Activated T-helper 2 cell treated with anti-CD3 and anti-CD28 coated beads, Interferon-gamma antibody, Interleukin-2, Interleukin-4, amounts not matched to agents 10 μg/mL and 5 μg/mL and 100 μg/mL, durations not matched to agents 14 hours and 24 hours and 36 hours (primary cell): ENCODE measurements at regions of chr2 and their contacts with region 1.

Region 1: DNA sequence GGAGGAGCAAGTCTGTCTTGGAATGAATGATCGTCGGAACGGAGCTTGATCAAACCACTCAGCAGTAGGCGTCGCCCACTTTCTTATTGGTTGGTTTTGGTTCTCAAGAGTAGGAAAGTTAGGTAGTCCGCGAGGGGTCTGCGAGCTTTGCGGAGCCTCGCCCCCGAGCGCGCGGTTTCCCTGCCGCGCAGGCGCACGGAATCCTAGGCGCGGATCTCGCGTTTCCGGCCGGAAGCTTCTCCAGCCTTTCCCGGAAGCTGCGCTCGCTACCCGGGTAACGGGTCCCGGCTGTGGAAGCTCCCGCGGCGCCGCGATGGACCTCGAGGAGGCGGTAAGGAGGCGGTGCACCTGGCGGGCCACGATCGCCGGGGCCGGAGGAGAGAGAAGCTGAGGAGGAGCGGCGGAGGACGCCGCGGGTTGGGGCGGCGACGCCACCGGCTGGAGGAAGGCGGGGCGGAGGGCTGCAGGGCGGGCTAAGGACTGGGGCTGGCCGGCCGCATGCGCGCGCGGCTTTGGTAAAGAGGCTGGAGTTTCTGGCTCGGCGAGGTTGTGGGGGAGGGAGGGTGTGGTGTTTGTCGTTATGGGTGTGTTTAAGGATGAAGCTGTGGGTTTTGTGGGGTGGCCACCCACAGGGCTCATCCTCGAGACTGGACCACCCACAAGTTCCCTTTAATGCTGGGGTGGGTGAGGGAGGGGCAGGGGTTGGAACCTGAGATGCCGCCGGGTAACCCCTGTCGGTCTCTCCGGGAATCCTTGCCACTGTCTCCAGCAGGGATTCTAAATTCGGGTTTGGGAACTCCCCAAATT is at the start of gene TAF1B:
- DNase-seq: peak; percentile 91
- H3K4me3 Mint-ChIP-seq: peak within 1 kb of the TSS; percentile 88
- H3K27ac Mint-ChIP-seq: peak within 1 kb of the TSS; percentile 89
- H3K4me1 Mint-ChIP-seq: peaks cover 47% of the 10 kb centered on the region
- H3K27me3 Mint-ChIP-seq: no peaks in the 10 kb centered on the region
- total RNA-seq, gene TAF1B: 29.3 and 32.4 TPM in 2 replicates

Region 2: GRCh38 chr2:9423100-9423921 is 420.1 kb before region 1 on chr2 and contains the starts of genes CPSF3 and ITGB1BP1:
- intact Hi-C with region 1: loop called (anchors 5 kb)
- DNase-seq: peak; percentile 97
- H3K4me3 Mint-ChIP-seq: peak within 1 kb of the TSS; percentile 91
- H3K27ac Mint-ChIP-seq: peak within 1 kb of the TSS; percentile 93
- H3K4me1 Mint-ChIP-seq: peaks cover 31% of the 10 kb centered on the region
- H3K27me3 Mint-ChIP-seq: no peaks in the 10 kb centered on the region
- total RNA-seq, gene CPSF3: 69.5 and 73.2 TPM in 2 replicates
- total RNA-seq, gene ITGB1BP1: 118 and 128 TPM in 2 replicates

Region 3: DNA sequence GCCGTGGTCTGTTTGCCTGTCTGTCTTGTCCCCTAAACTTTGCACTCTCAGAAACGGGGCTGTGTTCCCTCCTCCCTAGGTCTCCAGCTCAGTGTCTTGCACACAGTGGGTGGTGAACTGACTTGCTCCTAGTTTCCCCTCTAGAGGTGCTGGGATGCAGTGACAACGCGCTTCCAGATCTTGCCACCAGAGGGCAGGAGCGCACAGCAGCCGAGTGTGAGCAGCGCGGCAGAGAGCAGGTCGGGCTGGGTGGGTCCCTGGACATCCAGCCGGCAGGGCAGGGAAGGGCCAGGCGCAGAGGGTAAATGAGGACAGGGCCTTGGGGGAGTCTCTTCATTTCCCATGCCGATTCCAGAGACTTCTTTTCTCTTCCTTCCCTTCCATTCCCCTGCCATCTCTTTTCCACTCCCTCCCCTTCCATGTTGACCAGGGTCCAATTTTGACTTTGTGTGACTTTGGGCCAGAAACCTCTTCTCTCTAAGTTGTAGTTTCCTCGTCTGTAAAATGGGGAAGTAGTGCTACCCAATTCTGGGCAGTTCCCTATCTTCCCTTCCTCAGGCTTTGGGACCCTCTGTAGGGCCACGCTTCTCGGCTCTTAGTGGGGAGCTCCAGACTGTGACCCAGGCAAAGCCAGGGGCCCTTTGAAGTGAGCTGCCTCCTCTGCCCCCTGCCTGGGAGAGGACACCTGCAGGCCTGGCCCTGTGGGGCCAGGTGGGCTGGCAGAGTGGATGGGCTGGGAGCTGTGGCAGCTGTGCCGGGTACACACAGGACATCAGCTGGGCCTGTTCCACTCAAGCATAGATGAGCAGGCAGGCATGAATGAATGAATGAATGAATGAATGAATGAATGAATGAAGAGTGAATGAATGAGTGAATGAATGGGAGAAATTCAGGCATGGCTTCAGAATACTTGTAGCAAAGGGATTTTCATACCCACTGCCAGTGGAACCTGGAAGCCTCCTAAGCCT is 43.5 kb before region 1 on chr2:
- intact Hi-C with region 1: no loop called
- DNase-seq: peak; percentile 81
- H3K4me3 Mint-ChIP-seq: peak overlapping the region; percentile 72
- H3K27ac Mint-ChIP-seq: peak overlapping the region; percentile 71
- H3K4me1 Mint-ChIP-seq: peaks cover 34% of the 10 kb centered on the region
- H3K27me3 Mint-ChIP-seq: no peaks in the 10 kb centered on the region

Region 4: DNA sequence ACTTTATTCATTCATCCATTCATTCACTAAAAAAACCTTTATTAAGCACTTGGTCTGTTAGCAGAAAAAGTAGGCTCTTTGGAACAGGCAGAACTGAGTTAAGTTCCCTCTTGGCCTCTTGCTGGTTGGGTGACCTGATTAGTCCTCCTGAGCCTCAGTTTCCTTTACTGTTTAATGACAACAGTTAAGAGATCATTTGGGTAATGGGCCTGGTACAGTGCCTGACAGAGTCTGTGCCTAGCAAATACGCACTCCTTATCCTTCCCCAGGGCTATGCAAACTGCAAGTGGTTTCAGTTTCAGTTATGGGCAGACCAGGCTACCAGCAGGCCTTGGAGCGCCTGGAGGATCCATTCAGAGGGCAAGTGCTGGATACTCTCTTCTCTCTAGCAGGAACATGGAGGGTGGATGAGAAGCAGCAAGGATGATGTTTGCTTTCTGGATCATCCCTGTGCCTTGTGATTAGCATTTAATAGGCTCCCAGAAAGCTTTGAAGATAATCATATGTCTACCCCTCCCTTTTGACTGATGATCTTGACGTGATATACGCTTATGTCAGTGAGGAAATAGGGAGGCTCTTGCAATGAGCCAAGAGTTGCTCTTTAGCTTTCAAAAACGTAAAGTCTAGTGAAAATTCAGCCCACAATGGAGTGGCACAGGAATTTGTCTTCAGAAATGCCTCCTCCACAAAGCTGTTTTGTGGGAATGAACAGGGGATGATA is 12.6 kb before region 1 on chr2:
- intact Hi-C with region 1: loop called (anchors 1 kb)
- DNase-seq: no peak
- H3K4me3 Mint-ChIP-seq: no peak overlapping the region
- H3K27ac Mint-ChIP-seq: no peak overlapping the region
- H3K4me1 Mint-ChIP-seq: peaks cover 27% of the 10 kb centered on the region
- H3K27me3 Mint-ChIP-seq: peaks cover 21% of the 10 kb centered on the region

Region 5: GRCh38 chr2:9857814-9858729 is 14.6 kb after region 1 on chr2:
- intact Hi-C with region 1: no loop called
- DNase-seq: no peak
- H3K4me3 Mint-ChIP-seq: no peak overlapping the region
- H3K27ac Mint-ChIP-seq: no peak overlapping the region
- H3K4me1 Mint-ChIP-seq: no peaks in the 10 kb centered on the region
- H3K27me3 Mint-ChIP-seq: no peaks in the 10 kb centered on the region

Region 6: GRCh38 chr2:9914384-9915065 is 71.1 kb after region 1 on chr2:
- intact Hi-C with region 1: loop called (anchors 5 kb)
- DNase-seq: no peak
- H3K4me3 Mint-ChIP-seq: no peak overlapping the region
- H3K27ac Mint-ChIP-seq: no peak overlapping the region
- H3K4me1 Mint-ChIP-seq: peaks cover 12% of the 10 kb centered on the region
- H3K27me3 Mint-ChIP-seq: no peaks in the 10 kb centered on the region

Region 7: DNA sequence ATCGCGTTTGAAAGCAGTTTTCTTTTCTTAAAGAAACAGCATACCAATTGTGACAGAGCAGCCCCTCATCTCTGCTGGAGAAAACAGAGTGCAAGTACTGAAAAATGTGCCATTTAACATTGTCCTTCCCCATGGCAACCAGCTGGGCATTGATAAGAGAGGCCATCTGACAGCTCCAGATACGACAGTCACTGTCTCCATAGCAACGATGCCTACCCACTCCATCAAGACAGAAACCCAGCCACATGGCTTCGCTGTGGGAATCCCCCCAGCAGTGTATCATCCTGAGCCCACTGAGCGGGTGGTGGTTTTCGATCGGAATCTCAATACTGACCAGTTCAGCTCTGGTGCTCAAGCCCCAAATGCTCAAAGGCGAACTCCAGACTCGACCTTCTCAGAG is 117.6 kb after region 1 on chr2:
- intact Hi-C with region 1: no loop called
- DNase-seq: no peak
- H3K4me3 Mint-ChIP-seq: no peak overlapping the region
- H3K27ac Mint-ChIP-seq: no peak overlapping the region
- H3K4me1 Mint-ChIP-seq: peaks cover 17% of the 10 kb centered on the region
- H3K27me3 Mint-ChIP-seq: peaks cover 8% of the 10 kb centered on the region

Region 8: DNA sequence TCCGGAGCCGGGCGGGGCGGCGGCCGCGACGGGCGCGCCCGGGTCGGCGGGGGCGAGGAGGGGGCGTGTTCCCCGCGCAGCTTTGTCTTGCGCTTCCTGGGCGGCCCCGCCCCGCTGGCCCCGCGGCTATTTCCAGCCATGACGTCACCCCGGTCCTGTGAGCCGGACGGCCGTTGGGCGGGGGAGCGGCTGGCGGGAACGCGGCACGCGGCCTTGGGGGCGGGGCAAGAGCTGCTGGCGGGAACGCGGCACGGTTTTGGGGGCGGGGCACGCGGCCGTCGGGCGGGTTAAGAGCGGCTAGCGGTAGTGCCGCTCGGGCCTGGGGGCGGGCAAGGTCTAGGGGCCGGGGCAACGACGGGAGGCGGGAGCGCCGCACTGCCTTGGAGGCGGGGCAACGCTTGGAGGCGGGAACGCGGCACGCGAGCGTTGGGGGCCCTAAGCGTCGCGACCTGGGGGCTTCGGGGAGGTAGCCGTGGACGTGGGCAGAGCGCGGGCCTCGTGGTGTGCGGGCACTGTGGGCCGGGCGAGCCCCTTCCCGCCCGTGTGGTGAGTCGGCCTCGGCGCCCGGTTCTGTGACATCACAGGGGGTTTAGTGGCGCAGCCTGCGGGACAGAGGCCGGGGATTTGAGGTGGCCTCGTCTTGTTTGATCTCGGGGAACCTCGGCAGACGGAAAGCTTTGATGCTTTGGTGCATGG is 200.6 kb after region 1 on chr2:
- intact Hi-C with region 1: loop called (anchors 1 kb)
- DNase-seq: peak; percentile 88
- H3K4me3 Mint-ChIP-seq: peak overlapping the region; percentile 71
- H3K27ac Mint-ChIP-seq: peak overlapping the region; percentile 60
- H3K4me1 Mint-ChIP-seq: peaks cover 16% of the 10 kb centered on the region
- H3K27me3 Mint-ChIP-seq: peaks cover 16% of the 10 kb centered on the region

Region 9: DNA sequence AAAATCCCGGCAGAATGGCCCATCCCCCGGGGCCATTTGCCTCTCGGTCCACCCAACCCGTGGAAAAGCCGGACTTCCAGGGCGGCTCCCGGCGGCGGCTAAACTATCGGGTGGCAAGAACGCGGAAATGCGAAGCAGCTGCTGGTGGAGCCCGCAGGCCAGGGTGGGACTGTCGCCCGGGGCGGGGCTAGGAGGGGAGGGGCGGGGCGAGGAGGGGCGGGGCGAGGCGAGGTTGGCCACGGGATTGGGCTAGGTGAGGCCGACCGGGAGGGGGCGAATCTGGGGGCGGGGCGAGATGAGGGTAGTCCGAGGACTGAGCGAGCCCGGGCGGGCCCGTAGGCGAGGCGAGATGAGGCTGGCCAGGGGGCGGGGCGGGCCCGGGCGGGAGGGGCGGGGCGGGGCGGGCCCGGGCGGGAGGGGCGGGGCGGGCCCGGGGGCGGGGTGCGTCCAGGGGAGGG is 1311.5 kb after region 1 on chr2:
- intact Hi-C with region 1: loop called (anchors 10 kb)
- DNase-seq: peak; percentile 94
- H3K4me3 Mint-ChIP-seq: peak overlapping the region; percentile 83
- H3K27ac Mint-ChIP-seq: peak overlapping the region; percentile 75
- H3K4me1 Mint-ChIP-seq: peaks cover 9% of the 10 kb centered on the region
- H3K27me3 Mint-ChIP-seq: peaks cover 13% of the 10 kb centered on the region